ENCODE measurements at regions of chr4 and their contacts with region 1.

Region 1: DNA sequence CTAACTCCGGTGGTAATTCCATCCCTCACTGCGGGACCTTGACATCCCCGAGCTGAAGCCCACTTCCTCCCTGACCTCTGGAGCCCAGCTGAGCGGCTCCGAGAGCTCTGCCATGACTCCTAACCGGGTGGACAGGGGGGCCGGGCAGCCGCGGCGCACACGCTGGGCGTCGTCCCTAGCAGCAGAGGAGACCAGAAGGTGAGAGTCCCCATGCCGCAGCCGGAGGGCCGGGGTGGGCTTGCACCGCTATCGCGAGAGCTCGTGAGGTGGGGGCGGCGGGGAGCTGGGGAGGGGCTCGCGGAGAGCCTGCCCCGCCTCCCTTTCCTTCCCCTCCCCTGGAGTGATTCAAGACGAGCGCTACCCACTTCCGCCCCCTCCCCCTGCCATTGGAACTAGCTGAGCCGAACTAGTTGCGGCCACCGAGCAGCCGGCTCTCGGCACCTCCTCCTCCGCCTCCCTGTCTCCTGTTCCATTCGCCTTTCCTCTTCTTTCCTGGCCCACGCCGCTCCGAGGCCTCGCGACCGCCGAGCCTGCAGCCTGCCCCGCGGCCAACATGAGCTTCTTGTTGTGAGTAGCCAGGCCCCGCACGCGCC is at the start of gene MOB1B:
- DNase-seq: peak in 1 of 2 donors; percentile 93
- H3K4me3 ChIP-seq: peak within 1 kb of the TSS; percentile 79 to 87
- H3K27ac ChIP-seq: peak within 1 kb of the TSS; percentile 84
- H3K4me1 ChIP-seq: peaks cover 17% of the 10 kb centered on the region
- H3K27me3 ChIP-seq: no peaks in the 10 kb centered on the region
- CTCF ChIP-seq: peak in 1 of 3 experiments; percentile 15
- POLR2A ChIP-seq: peak in 1 of 2 donors; percentile 32
- total RNA-seq, gene MOB1B: 13.0 TPM

Region 2: DNA sequence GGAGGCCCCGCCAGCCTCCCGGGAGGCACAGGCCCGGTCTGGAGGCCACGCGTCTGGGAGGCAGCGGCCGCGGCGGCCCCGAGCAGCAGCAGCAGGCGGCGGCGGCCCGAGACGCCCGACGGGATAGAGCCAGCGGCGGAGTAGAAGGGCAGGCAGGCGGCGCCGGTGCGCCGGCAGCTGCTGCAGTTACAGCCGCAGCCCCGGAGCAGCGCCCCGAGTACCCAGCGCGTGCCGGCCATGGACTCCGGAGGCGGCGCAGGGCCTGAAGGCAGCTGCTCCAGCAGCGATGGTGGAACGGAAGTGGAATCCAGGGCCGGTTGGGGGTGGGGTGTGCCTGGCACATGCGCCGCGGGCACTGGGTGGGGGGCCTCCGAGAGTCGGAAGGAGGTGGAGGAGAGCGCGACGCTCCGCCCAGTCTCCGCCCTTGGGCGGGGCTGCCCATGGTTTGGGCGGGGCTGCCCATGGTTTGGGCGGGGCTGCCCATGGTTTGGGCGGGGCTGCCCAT is 62.4 kb before region 1 on chr4 and contains the start of gene GRSF1:
- intact Hi-C with region 1: loop called (anchors 10 kb)
- DNase-seq: no peak
- H3K4me3 ChIP-seq: peak within 1 kb of the TSS; percentile 60 to 98
- H3K27ac ChIP-seq: peak within 1 kb of the TSS; percentile 87
- H3K4me1 ChIP-seq: peaks cover 32% of the 10 kb centered on the region
- H3K27me3 ChIP-seq: no peaks in the 10 kb centered on the region
- CTCF ChIP-seq: no peak
- POLR2A ChIP-seq: peak in 1 of 2 donors; percentile 31
- total RNA-seq, gene GRSF1: 35.1 TPM

Region 3: DNA sequence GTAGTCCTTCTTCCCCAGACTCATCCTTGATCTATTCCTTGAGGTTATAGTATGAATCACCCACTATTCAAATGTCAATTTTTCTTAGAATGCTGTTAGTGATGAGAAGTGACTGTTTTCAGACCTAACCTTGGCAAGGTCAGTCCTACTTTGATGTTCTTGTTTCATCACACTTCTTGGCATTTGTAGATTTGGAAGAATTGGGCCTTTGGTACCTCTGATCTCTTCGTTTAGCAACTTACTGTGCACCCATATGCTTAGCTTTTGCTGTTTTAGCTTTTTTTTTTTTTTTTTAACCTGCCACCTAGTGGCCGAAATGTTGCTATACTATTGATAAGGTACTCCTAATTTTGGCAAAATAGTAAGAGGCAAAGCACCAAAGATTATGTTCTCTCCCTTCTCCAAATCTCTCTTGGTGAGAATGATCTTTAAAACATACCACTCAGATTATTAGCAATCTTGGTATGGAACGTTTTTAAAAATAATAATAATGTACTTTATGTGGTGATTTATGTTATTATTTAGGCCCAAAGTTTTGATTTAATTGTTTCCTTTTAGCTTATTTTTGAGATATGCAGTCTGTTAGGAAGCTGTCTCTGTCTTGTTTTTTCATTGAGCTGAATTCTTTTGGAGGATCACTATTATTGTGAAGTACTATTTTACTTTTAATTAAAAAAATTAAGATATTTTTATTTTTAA is 108.0 kb after region 1 on chr4:
- intact Hi-C with region 1: loop called (anchors 10 kb)
- DNase-seq: no peak
- H3K4me3 ChIP-seq: no peak overlapping the region
- H3K27ac ChIP-seq: no peak overlapping the region
- H3K4me1 ChIP-seq: no peaks in the 10 kb centered on the region
- H3K27me3 ChIP-seq: no peaks in the 10 kb centered on the region
- CTCF ChIP-seq: peak; percentile 40 to 66 (median 43)
- POLR2A ChIP-seq: no peak

Measured in vagina (tissue), 2 donors.